ENCODE measurements at regions of chr9 and their contacts with region 1.

Region 1: GRCh38 chr9:98775831-98776441 is 20.4 kb downstream of the ANKS6 start:
- DNase-seq: peak; percentile 52
- H3K4me3 ChIP-seq: no peak overlapping the region
- H3K27ac ChIP-seq: no peak overlapping the region
- H3K27me3 ChIP-seq: no peaks in the 10 kb centered on the region
- CTCF ChIP-seq: peak; percentile 89

Region 2: DNA sequence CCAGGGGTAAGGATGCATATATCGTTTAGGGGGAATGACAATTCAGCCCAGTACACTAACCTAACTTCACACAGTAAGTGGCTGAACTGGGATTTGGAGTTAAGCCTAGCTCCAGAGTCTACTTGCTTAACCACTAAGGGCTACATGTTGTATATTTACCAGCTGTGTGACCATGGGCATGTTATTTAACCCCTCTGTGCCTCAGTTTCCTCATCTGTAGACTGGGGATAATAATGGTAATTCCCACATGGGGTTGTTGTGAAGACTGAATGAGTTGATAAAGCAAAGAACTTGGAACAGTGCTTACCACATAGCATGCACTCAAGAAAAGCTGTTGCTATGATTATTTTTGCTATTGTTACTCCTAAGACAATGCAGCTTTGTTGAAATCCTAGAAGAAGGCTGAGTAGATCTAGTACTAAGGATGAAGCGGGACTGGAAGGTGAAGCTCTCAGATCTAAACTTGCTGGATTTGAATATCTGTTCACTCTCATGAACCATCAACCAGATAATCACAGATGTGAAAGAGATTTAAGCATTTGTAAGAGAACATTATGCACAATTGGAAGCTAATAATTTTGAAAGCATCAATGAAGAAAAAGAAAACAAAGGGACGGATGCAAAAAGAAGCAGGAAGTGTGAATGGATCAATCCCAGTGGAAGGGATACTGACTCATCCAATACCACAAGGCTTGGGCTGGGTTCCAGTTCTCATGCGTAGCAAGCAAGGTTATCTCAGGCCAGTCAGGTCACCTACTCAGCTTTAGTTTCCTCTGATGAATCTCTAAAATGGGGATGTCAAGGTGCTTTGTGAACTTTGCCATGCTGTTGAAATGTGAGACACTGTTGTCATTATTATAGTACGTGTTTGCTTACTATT is 442.0 kb before region 1 on chr9:
- CTCF ChIA-PET with region 1: interaction called, 14 read pairs
- POLR2A ChIA-PET with region 1: no interaction called
- DNase-seq: peak; percentile 44
- H3K4me3 ChIP-seq: no peak overlapping the region
- H3K27ac ChIP-seq: no peak overlapping the region
- H3K27me3 ChIP-seq: no peaks in the 10 kb centered on the region
- CTCF ChIP-seq: no peak

Region 3: DNA sequence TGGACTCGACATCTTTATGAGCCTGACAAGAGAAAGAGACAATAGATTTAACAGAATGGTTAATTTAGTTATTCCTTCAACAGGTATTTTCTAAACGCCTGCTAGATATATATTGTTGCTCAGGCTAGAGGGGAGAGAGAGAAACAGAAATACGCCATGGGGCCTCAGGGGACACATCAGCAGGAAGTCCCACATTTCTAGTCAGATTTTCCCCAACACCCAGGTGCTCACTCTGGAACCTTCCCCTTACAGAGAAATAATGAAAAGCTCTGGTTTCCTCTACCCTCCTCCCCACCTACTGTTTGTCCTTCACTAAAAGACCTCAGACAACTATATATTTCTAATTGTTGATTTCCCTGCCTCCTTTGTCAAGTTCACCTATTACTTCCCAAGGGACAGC is 390.2 kb before region 1 on chr9:
- CTCF ChIA-PET with region 1: interaction called, 17 read pairs
- POLR2A ChIA-PET with region 1: no interaction called
- DNase-seq: no peak
- H3K4me3 ChIP-seq: no peak overlapping the region
- H3K27ac ChIP-seq: no peak overlapping the region
- H3K27me3 ChIP-seq: peaks cover 6% of the 10 kb centered on the region
- CTCF ChIP-seq: no peak

Region 4: GRCh38 chr9:98724810-98725530 is 51.0 kb before region 1 on chr9:
- CTCF ChIA-PET with region 1: interaction called, 16 read pairs
- POLR2A ChIA-PET with region 1: no interaction called
- DNase-seq: no peak
- H3K4me3 ChIP-seq: no peak overlapping the region
- H3K27ac ChIP-seq: no peak overlapping the region
- H3K27me3 ChIP-seq: peaks cover 36% of the 10 kb centered on the region
- CTCF ChIP-seq: no peak

Region 5: DNA sequence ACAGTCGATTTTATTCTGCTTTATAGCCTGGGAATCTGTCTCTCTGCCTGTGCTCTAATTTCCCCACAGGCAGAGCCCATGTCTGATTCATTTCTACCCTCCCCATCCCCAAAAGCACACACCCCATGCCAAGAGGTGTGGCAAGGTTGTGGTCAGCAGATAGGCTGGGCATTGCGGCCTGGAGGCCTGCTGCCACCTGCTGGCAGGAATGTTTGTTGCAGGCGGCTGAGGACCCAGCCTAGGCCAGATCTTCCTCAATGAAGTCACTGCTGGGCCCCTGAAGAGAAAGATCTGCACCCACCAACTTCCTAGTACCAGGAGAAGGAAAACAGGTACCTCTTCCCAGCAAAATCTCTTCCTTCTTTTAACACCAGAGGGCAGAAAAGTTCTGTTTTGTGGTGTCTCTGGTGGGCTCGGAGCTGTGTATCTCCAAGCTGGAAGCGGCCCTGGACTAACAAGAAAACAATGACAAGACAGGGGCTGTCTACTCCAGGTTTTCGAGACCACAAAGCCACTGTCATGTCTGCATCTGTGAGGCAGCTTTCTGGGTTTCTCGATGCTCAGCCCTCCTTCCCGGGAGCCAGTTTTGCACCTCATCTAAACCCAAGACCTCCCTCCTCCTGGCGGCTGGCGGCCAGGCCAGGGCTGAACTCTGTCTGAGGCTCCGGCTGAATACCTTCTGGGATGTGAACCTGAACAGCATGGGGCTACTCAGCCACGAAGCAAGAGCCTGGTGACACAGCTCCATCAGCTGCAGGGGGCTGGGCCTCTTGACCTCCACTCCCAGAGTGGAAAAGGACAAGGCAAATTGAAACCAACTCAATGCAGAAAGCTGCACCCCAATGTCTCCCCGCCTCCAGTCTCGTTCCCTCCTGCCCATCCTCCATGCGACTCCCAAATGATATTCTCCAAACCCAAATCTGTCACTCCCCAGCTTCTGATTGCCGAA is 15.5 kb after region 1 on chr9:
- CTCF ChIA-PET with region 1: interaction called, 40 read pairs
- POLR2A ChIA-PET with region 1: no interaction called
- DNase-seq: peak; percentile 80
- H3K4me3 ChIP-seq: no peak overlapping the region
- H3K27ac ChIP-seq: peak overlapping the region; percentile 21
- H3K27me3 ChIP-seq: no peaks in the 10 kb centered on the region
- CTCF ChIP-seq: peak; percentile 96

Measured in AG04450 (cell line).